ENCODE measurements at regions of chr1 and their contacts with region 1.

Region 1: GRCh38 chr1:92485381-92486257 is 1.1 kb downstream of the GFI1 start:
- DNase-seq: peak; percentile 71 to 88 (median 78)
- H3K4me3 ChIP-seq: peak overlapping the region; percentile 94
- H3K4me3 Mint-ChIP-seq: peak overlapping the region; percentile 90 to 100 (median 93)
- H3K27ac ChIP-seq: peak overlapping the region; percentile 78
- H3K27ac Mint-ChIP-seq: peak overlapping the region; percentile 88 to 98 (median 93)
- H3K4me1 ChIP-seq: peaks cover 25% of the 10 kb centered on the region
- H3K4me1 Mint-ChIP-seq: peaks cover 38 to 47% (median 41%) of the 10 kb centered on the region in 3 donors
- H3K27me3 ChIP-seq: no peaks in the 10 kb centered on the region
- H3K27me3 Mint-ChIP-seq: peaks cover 0 to 3% of the 10 kb centered on the region in 2 donors

Region 2: GRCh38 chr1:92310185-92310597 is 175.4 kb before region 1 on chr1:
- CTCF ChIA-PET with region 1: interaction called, 63 read pairs
- POLR2A ChIA-PET with region 1: interaction called, 21 read pairs
- DNase-seq: peak in 2 of 5 donors; percentile 29 to 31
- H3K4me3 ChIP-seq: no peak overlapping the region
- H3K4me3 Mint-ChIP-seq: no peak overlapping the region
- H3K27ac ChIP-seq: no peak overlapping the region
- H3K27ac Mint-ChIP-seq: peak overlapping the region in 4 of 8 donors; percentile 3 to 66 (median 23)
- H3K4me1 ChIP-seq: peaks cover 28% of the 10 kb centered on the region
- H3K4me1 Mint-ChIP-seq: peaks cover 33 to 44% (median 44%) of the 10 kb centered on the region in 3 donors
- H3K27me3 ChIP-seq: no peaks in the 10 kb centered on the region
- H3K27me3 Mint-ChIP-seq: no peaks in the 10 kb centered on the region

Region 3: GRCh38 chr1:92317836-92318493 is 167.7 kb before region 1 on chr1:
- CTCF ChIA-PET with region 1: interaction called, 63 read pairs
- POLR2A ChIA-PET with region 1: interaction called, 21 read pairs
- DNase-seq: peak in 3 of 5 donors; percentile 8 to 53 (median 44)
- H3K4me3 ChIP-seq: no peak overlapping the region
- H3K4me3 Mint-ChIP-seq: peak overlapping the region; percentile 38 to 74 (median 66)
- H3K27ac ChIP-seq: no peak overlapping the region
- H3K27ac Mint-ChIP-seq: peak overlapping the region; percentile 79 to 97 (median 85)
- H3K4me1 ChIP-seq: peaks cover 56% of the 10 kb centered on the region
- H3K4me1 Mint-ChIP-seq: peaks cover 54 to 66% (median 62%) of the 10 kb centered on the region in 3 donors
- H3K27me3 ChIP-seq: no peaks in the 10 kb centered on the region
- H3K27me3 Mint-ChIP-seq: no peaks in the 10 kb centered on the region

Region 4: DNA sequence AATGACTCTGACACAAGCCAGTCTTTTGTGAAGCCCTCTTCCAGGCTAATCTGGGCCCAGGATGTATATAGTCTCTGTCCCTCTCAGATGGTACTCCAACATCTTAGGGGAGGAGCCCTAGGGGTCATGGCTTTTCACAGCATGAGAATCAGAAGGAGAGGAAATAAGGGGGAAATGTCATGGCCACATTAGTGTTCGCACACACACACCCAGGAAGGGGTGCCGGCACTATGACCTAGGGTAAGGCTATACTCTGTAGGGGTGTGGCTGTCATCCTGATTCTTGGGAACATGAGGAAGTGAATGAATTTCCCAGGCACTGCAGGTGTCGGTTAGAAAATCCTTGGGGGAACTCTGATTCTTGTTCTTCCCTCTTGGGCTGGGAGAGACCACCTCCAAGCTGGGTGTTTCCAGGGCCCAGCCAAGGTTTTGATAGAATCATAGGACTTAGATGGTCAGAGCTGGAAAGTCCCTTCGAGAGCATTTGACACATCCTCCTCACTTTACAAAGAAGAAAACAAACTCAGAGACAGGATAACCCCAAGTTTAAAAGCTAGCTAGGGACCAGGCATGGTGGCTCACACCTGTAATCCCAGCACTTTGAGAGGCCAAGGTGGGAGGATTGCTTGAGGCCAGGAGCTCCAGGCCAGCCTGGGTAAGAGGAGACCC is 20.9 kb before region 1 on chr1:
- CTCF ChIA-PET with region 1: interaction called, 13 read pairs
- POLR2A ChIA-PET with region 1: interaction called, 6 read pairs
- DNase-seq: no peak
- H3K4me3 ChIP-seq: no peak overlapping the region
- H3K4me3 Mint-ChIP-seq: peak overlapping the region in 5 of 7 donors; percentile 13 to 51 (median 47)
- H3K27ac ChIP-seq: no peak overlapping the region
- H3K27ac Mint-ChIP-seq: peak overlapping the region; percentile 22 to 84 (median 64)
- H3K4me1 ChIP-seq: peaks cover 44% of the 10 kb centered on the region
- H3K4me1 Mint-ChIP-seq: peaks cover 46 to 76% (median 54%) of the 10 kb centered on the region in 3 donors
- H3K27me3 ChIP-seq: no peaks in the 10 kb centered on the region
- H3K27me3 Mint-ChIP-seq: no peaks in the 10 kb centered on the region

Region 5: DNA sequence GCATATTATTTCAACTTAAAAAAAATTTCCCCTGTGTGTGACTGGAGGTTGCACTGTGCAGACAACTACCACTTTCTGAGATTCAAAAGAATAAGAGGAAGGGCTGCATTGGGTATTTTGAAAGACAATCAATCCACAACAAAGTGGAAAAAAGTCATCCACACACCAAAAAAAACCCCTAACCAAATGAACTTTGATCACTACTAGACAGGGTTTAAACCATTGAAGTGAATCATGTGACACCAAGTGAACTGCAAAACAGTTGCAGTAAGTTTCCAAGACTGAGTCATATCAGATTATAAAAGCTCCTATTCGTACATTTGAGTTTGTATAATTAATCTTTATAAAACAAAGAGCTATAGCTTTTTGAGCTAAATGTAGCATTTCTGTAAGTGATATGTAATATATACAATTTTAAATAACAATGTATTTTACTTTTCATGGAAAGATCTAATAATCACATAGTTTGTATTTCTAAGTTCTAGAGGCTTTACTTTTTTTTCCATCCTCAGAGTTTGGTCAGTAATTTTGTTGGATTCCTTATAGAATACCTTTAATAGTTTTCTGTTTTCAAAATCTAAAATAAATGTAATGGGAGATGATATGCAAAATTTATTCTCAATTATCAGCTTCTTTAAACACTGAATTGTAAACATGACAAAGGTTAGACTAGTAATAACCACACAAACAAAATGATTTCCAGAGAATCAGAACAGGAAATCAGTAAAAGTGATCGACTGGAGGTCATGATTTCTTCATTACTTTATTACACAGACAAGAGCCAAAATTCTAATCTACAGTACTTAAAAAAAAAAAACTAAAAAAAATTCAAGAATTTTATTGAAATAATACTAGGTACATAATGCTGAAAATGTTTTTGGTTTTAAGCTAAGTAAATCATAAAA is 51.6 kb after region 1 on chr1:
- CTCF ChIA-PET with region 1: interaction called, 37 read pairs
- POLR2A ChIA-PET with region 1: interaction called, 51 read pairs
- DNase-seq: peak in 2 of 5 donors; percentile 68 to 80
- H3K4me3 ChIP-seq: no peak overlapping the region
- H3K4me3 Mint-ChIP-seq: peak overlapping the region; percentile 46 to 75 (median 63)
- H3K27ac ChIP-seq: no peak overlapping the region
- H3K27ac Mint-ChIP-seq: peak overlapping the region in 7 of 8 donors; percentile 30 to 92 (median 77)
- H3K4me1 ChIP-seq: peaks cover 34% of the 10 kb centered on the region
- H3K4me1 Mint-ChIP-seq: peaks cover 51 to 64% (median 55%) of the 10 kb centered on the region in 3 donors
- H3K27me3 ChIP-seq: no peaks in the 10 kb centered on the region
- H3K27me3 Mint-ChIP-seq: peaks cover 0 to 1% of the 10 kb centered on the region in 2 donors

Region 6: GRCh38 chr1:92583821-92584760 is 98.5 kb after region 1 on chr1:
- CTCF ChIA-PET with region 1: interaction called, 17 read pairs
- POLR2A ChIA-PET with region 1: interaction called, 25 read pairs
- DNase-seq: peak in 2 of 5 donors; percentile 65 to 66
- H3K4me3 ChIP-seq: peak overlapping the region; percentile 11
- H3K4me3 Mint-ChIP-seq: peak overlapping the region; percentile 7 to 76 (median 53)
- H3K27ac ChIP-seq: no peak overlapping the region
- H3K27ac Mint-ChIP-seq: peak overlapping the region; percentile 6 to 90 (median 46)
- H3K4me1 ChIP-seq: peaks cover 33% of the 10 kb centered on the region
- H3K4me1 Mint-ChIP-seq: peaks cover 46 to 75% (median 52%) of the 10 kb centered on the region in 3 donors
- H3K27me3 ChIP-seq: no peaks in the 10 kb centered on the region
- H3K27me3 Mint-ChIP-seq: no peaks in the 10 kb centered on the region

Region 7: GRCh38 chr1:92599184-92599583 is 113.6 kb after region 1 on chr1:
- CTCF ChIA-PET with region 1: interaction called, 23 read pairs
- POLR2A ChIA-PET with region 1: interaction called, 7 read pairs
- DNase-seq: peak in 2 of 5 donors; percentile 17 to 43
- H3K4me3 ChIP-seq: no peak overlapping the region
- H3K4me3 Mint-ChIP-seq: no peak overlapping the region
- H3K27ac ChIP-seq: no peak overlapping the region
- H3K27ac Mint-ChIP-seq: no peak overlapping the region
- H3K4me1 ChIP-seq: no peaks in the 10 kb centered on the region
- H3K4me1 Mint-ChIP-seq: peaks cover 0 to 2% (median 0%) of the 10 kb centered on the region in 3 donors
- H3K27me3 ChIP-seq: no peaks in the 10 kb centered on the region
- H3K27me3 Mint-ChIP-seq: no peaks in the 10 kb centered on the region